CD14-positive monocyte (primary cell): ENCODE measurements at regions of chr4 and their contacts with region 1.

Region 1: GRCh38 chr4:75724066-75724866 is at the start of gene USO1:
- DNase-seq: peak; percentile 98 to 99 (median 99)
- H3K4me3 ChIP-seq: peak within 1 kb of the TSS; percentile 70 to 95 (median 89)
- H3K4me3 Mint-ChIP-seq: peak within 1 kb of the TSS; percentile 98 to 99
- H3K27ac ChIP-seq: peak within 1 kb of the TSS; percentile 95 to 96
- H3K27ac Mint-ChIP-seq: peak within 1 kb of the TSS; percentile 98 to 99 (median 99)
- H3K4me1 ChIP-seq: peaks cover 25 to 32% of the 10 kb centered on the region in 2 donors
- H3K4me1 Mint-ChIP-seq: peaks cover 47% of the 10 kb centered on the region
- H3K27me3 ChIP-seq: no peaks in the 10 kb centered on the region
- H3K27me3 Mint-ChIP-seq: peaks cover 0 to 3% (median 0%) of the 10 kb centered on the region in 3 donors
- CTCF ChIP-seq: peak; percentile 77
- polyA plus RNA-seq, gene USO1: 15.4 to 26.9 (median 17.5) TPM

Region 2: DNA sequence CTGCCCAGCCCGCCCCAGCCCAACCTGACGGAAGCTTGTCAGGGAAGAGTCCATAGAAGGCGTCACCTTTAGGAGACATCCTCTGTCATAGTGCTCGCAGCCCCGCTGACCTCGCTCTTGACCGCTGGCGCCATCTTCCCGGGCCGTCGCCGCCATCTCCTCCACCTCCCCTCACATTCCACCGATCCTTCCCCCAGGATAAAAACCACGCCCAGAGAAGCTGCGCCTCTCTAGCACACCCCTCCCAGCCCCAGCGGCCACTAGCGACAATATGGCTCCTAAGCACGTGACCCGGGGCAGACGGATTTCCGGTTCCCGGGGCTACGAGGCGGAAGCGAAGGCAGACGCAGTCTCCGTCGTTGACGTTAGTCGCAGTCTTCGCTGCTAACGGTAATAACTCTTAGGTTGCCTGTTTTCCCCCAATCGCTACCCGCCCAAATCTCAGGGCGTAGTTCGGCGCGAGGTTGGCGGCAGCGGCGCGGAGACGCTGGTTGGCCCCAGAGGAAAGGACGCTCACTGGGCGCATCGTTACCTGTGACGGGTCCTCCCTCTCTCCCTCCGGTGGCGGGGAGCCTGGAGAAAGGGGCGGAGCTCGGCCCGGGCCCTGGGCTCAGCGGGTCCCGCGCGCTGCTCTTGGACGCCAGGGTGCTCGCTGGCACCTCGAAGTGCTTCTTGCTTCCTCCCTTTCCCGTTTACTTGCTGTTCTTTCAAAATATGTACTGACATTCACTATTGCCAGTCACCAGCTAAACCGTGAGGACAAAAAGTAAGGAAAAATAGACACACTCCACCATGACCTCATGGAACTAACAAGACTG is 209.9 kb before region 1 on chr4 and contains the starts of genes RCHY1 and THAP6:
- intact Hi-C with region 1: loop called (anchors 10 kb)
- DNase-seq: peak; percentile 89 to 94 (median 90)
- H3K4me3 ChIP-seq: peak within 1 kb of the TSS; percentile 61 to 89 (median 84)
- H3K4me3 Mint-ChIP-seq: peak within 1 kb of the TSS in 1 of 2 donors; percentile 98
- H3K27ac ChIP-seq: peak within 1 kb of the TSS; percentile 96 to 97
- H3K27ac Mint-ChIP-seq: peak within 1 kb of the TSS in 6 of 7 donors; percentile 98 to 99 (median 98)
- H3K4me1 ChIP-seq: peaks cover 48 to 50% of the 10 kb centered on the region in 2 donors
- H3K4me1 Mint-ChIP-seq: peaks cover 24% of the 10 kb centered on the region
- H3K27me3 ChIP-seq: no peaks in the 10 kb centered on the region
- H3K27me3 Mint-ChIP-seq: peaks cover 0 to 2% (median 0%) of the 10 kb centered on the region in 3 donors
- CTCF ChIP-seq: no peak
- polyA plus RNA-seq, gene RCHY1: 22.5 to 44.1 (median 23.0) TPM
- polyA plus RNA-seq, gene THAP6: 2.3 to 6.1 (median 5.6) TPM

Region 3: DNA sequence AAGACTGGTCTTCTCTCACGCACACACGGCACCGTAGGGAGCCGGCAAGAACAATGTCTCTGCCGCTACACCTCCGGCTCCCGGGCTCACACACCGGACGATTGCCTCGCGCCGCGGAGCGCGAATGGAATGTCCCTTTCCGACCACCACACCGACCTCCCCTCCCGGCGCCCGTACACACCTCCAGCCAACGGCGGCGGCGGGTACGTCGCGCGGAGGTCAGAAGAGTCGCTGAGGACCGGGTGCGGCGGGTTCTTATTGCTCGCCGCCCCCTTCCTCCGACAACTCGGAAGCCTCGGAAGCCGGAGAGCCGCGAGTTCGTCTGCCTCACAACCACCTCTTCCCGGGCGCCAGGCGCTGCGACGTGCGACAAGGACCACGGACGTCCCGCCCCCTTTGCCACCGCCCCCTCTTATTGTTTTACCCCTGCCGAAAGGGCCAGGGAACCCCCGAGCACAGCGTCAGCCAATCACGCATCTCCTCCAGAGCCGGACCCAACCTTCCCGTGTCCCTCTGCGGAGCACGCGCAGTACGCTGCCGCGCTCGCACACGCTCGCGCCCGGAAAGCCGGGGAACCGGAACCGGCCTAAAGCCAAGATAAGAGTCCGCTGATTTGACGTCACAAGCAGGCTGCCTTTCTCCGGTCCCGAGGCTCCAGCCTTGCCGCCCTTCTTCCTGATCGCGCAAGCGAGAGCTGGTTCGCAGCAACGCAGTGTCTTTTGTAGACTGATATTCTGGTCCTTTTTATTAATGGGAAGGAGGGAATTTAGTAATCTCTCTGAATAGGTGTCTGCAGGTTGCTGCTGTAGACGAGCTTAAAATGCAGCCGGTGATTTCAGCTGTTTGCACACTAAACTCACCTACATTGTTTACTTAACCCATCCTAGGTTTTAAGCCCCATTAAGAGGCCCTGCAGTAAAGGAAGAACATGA is 51.0 kb before region 1 on chr4 and contains the start of gene G3BP2:
- intact Hi-C with region 1: loop called (anchors 2 to 5 kb)
- DNase-seq: peak; percentile 97 to 99 (median 98)
- H3K4me3 ChIP-seq: peak within 1 kb of the TSS; percentile 79 to 96 (median 81)
- H3K4me3 Mint-ChIP-seq: peak within 1 kb of the TSS; percentile 97 to 98
- H3K27ac ChIP-seq: peak within 1 kb of the TSS; percentile 92 to 98
- H3K27ac Mint-ChIP-seq: peak within 1 kb of the TSS; percentile 95 to 98 (median 97)
- H3K4me1 ChIP-seq: peaks cover 18 to 43% of the 10 kb centered on the region in 2 donors
- H3K4me1 Mint-ChIP-seq: peaks cover 37% of the 10 kb centered on the region
- H3K27me3 ChIP-seq: no peaks in the 10 kb centered on the region
- H3K27me3 Mint-ChIP-seq: no peaks in the 10 kb centered on the region
- CTCF ChIP-seq: no peak
- polyA plus RNA-seq, gene G3BP2: 32.5 to 92.3 (median 74.2) TPM

Region 4: DNA sequence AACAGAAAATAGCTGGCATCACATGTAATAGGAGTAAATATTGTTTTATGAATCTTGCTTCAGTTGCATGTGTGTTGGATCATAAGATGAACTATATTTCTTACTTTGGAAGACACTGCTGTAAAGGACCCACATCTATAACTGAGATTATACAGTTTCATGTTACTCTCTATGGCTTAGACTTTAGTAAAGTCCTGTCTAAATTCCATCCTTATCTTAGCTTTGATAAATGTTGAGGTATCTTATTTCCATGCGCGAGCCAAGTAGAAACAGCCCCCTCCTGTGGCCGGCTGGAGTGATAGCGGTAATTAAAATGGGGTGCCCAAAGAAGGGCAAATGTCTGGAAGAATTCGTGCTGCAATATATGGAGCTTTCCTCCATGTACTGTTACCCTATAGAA is 653.6 kb after region 1 on chr4:
- intact Hi-C with region 1: no loop called
- DNase-seq: peak; percentile 1 to 26 (median 17)
- H3K4me3 ChIP-seq: no peak overlapping the region
- H3K4me3 Mint-ChIP-seq: no peak overlapping the region
- H3K27ac ChIP-seq: no peak overlapping the region
- H3K27ac Mint-ChIP-seq: no peak overlapping the region
- H3K4me1 ChIP-seq: peaks cover 6% of the 10 kb centered on the region in 2 donors
- H3K4me1 Mint-ChIP-seq: peaks cover 23% of the 10 kb centered on the region
- H3K27me3 ChIP-seq: no peaks in the 10 kb centered on the region
- H3K27me3 Mint-ChIP-seq: peaks cover 0 to 5% (median 0%) of the 10 kb centered on the region in 3 donors
- CTCF ChIP-seq: peak; percentile 71